CD8-positive, alpha-beta T cell (primary cell): ENCODE measurements at regions of chr14 and their contacts with region 1.

Region 1: DNA sequence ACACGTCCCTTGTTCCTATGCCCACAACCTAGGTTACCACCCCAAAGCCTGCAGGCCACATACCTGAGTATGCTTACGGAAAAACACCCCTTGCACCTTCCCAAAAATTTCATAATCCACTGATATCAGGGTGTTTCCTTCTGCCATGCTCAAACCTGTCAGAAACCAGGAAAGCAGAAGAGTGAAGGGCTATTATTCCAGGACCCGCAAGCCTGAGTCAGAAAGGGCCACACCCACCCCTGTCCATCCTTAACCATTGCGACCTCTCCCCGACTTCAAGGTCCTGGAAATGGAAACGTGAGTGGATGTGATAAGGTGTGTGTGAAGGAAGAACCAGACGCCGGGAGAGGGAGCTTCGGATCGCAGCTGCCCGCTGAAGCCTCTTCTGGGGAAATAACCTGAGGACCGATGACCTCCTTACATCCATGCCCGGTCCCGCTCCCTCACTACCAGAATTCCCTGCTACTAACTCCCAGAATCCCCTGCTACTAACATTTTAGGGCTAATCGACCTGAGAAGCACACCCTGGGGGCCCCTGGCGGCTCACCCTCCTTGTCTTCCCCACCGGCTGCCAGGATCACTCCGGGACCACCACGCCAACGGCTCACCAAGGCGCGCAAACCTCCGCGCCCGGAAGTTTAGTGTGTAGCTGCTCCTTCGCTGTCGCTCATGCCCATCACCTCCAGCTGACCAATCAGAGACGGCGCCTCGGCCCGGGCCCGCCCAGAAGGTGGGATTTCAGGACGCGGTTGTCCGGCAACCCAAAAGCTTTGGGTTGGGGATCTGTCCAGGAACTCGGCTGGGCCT is at the start of gene ACYP1:
- DNase-seq: peak; percentile 78 to 93 (median 89)
- ATAC-seq: peak; percentile 99
- H3K4me3 ChIP-seq: peak within 1 kb of the TSS; percentile 80 to 84
- H3K4me3 Mint-ChIP-seq: peak within 1 kb of the TSS; percentile 99
- H3K27ac ChIP-seq: peak within 1 kb of the TSS; percentile 60 to 68
- H3K27ac Mint-ChIP-seq: peak within 1 kb of the TSS; percentile 95
- H3K4me1 ChIP-seq: peaks cover 9% of the 10 kb centered on the region
- H3K4me1 Mint-ChIP-seq: peaks cover 27% of the 10 kb centered on the region
- H3K27me3 ChIP-seq: no peaks in the 10 kb centered on the region
- H3K27me3 Mint-ChIP-seq: no peaks in the 10 kb centered on the region
- CTCF ChIP-seq: no peak
- total RNA-seq, gene ACYP1: 4.3 to 5.3 TPM

Region 2: GRCh38 chr14:75050852-75051554 is 12.6 kb before region 1 on chr14 and contains the start of gene MLH3:
- CTCF ChIA-PET with region 1: interaction called, 3 read pairs
- POLR2A ChIA-PET with region 1: interaction called, 6 read pairs
- intact Hi-C with region 1: loop called (anchors 1 to 2 kb)
- DNase-seq: peak; percentile 65 to 92 (median 81)
- ATAC-seq: peak; percentile 80
- H3K4me3 ChIP-seq: peak within 1 kb of the TSS; percentile 67 to 85
- H3K4me3 Mint-ChIP-seq: peak within 1 kb of the TSS; percentile 94
- H3K27ac ChIP-seq: peak within 1 kb of the TSS; percentile 62 to 77
- H3K27ac Mint-ChIP-seq: peak within 1 kb of the TSS; percentile 96
- H3K4me1 ChIP-seq: peaks cover 15% of the 10 kb centered on the region
- H3K4me1 Mint-ChIP-seq: peaks cover 45% of the 10 kb centered on the region
- H3K27me3 ChIP-seq: no peaks in the 10 kb centered on the region
- H3K27me3 Mint-ChIP-seq: no peaks in the 10 kb centered on the region
- CTCF ChIP-seq: no peak
- total RNA-seq, gene MLH3: 8.5 to 12.2 TPM

Region 3: GRCh38 chr14:75126679-75127473 is 63.3 kb after region 1 on chr14 and contains the start of gene NEK9:
- CTCF ChIA-PET with region 1: no interaction called
- POLR2A ChIA-PET with region 1: interaction called, 3 read pairs
- intact Hi-C with region 1: loop called in 1 of 2 experiments (anchors 10 kb)
- DNase-seq: peak; percentile 77 to 93 (median 89)
- ATAC-seq: peak; percentile 82
- H3K4me3 ChIP-seq: peak within 1 kb of the TSS; percentile 87 to 95
- H3K4me3 Mint-ChIP-seq: peak within 1 kb of the TSS; percentile 95
- H3K27ac ChIP-seq: peak within 1 kb of the TSS; percentile 87 to 92
- H3K27ac Mint-ChIP-seq: peak within 1 kb of the TSS; percentile 98
- H3K4me1 ChIP-seq: peaks cover 23% of the 10 kb centered on the region
- H3K4me1 Mint-ChIP-seq: peaks cover 46% of the 10 kb centered on the region
- H3K27me3 ChIP-seq: no peaks in the 10 kb centered on the region
- H3K27me3 Mint-ChIP-seq: no peaks in the 10 kb centered on the region
- CTCF ChIP-seq: no peak
- total RNA-seq, gene NEK9: 40.7 to 42.9 TPM